ENCODE measurements at regions of chr9 and their contacts with region 1.

Region 1: GRCh38 chr9:73149371-73150067 is 2.1 kb upstream of the ANXA1 start:
- DNase-seq: no peak
- H3K4me3 Mint-ChIP-seq: peak overlapping the region; percentile 20
- H3K27ac Mint-ChIP-seq: peak overlapping the region; percentile 76
- H3K4me1 Mint-ChIP-seq: peaks cover 63% of the 10 kb centered on the region
- H3K27me3 Mint-ChIP-seq: no peaks in the 10 kb centered on the region

Region 2: GRCh38 chr9:71897577-71897976 is 1251.9 kb before region 1 on chr9:
- intact Hi-C with region 1: loop called (anchors 10 kb)
- DNase-seq: no peak
- H3K4me3 Mint-ChIP-seq: peak overlapping the region; percentile 2
- H3K27ac Mint-ChIP-seq: peak overlapping the region; percentile 38
- H3K4me1 Mint-ChIP-seq: peaks cover 76% of the 10 kb centered on the region
- H3K27me3 Mint-ChIP-seq: no peaks in the 10 kb centered on the region

Region 3: GRCh38 chr9:73116031-73116430 is 33.5 kb before region 1 on chr9:
- intact Hi-C with region 1: loop called (anchors 1 kb)
- DNase-seq: no peak
- H3K4me3 Mint-ChIP-seq: no peak overlapping the region
- H3K27ac Mint-ChIP-seq: no peak overlapping the region
- H3K4me1 Mint-ChIP-seq: peaks cover 32% of the 10 kb centered on the region
- H3K27me3 Mint-ChIP-seq: no peaks in the 10 kb centered on the region

Region 4: GRCh38 chr9:73183917-73184861 is 34.7 kb after region 1 on chr9:
- intact Hi-C with region 1: loop called (anchors 2 kb)
- DNase-seq: no peak
- H3K4me3 Mint-ChIP-seq: no peak overlapping the region
- H3K27ac Mint-ChIP-seq: no peak overlapping the region
- H3K4me1 Mint-ChIP-seq: peaks cover 9% of the 10 kb centered on the region
- H3K27me3 Mint-ChIP-seq: peaks cover 29% of the 10 kb centered on the region

Region 5: GRCh38 chr9:73230251-73230650 is 80.7 kb after region 1 on chr9:
- intact Hi-C with region 1: loop called (anchors 2 kb)
- DNase-seq: no peak
- H3K4me3 Mint-ChIP-seq: no peak overlapping the region
- H3K27ac Mint-ChIP-seq: no peak overlapping the region
- H3K4me1 Mint-ChIP-seq: peaks cover 11% of the 10 kb centered on the region
- H3K27me3 Mint-ChIP-seq: peaks cover 8% of the 10 kb centered on the region

Measured in activated T-helper 2 cell treated with anti-CD3 and anti-CD28 coated beads, Interferon-gamma antibody, Interleukin-2, Interleukin-4, amounts not matched to agents 10 μg/mL and 5 μg/mL and 100 μg/mL, durations not matched to agents 14 hours and 24 hours and 36 hours (primary cell).